ENCODE measurements at regions of chr1 and their contacts with region 1.

Region 1: DNA sequence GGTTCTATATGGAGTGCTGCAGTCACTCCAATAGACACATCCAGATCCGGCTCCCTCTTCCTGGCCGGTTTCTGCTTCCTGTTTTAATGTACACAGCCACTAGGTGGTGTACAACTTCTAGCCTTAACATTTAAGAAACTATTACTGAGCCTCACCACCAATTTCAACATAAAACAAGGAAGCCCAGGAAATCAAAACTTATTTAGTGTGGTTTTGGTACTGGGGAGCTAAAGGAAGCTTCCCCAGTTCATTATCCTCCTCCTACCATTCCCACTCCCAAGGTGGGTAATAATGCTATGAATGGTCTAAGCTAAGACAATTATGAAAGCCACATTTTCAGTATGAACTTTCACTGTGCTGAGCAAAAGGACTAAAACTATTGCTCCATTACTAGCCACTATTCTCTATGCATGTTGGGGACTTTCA is 25.5 kb upstream of the MTMR11 start:
- DNase-seq: peak; percentile 62
- H3K4me3 ChIP-seq: no peak overlapping the region
- H3K27ac ChIP-seq: no peak overlapping the region
- H3K27me3 ChIP-seq: no peaks in the 10 kb centered on the region
- CTCF ChIP-seq: peak; percentile 75

Region 2: DNA sequence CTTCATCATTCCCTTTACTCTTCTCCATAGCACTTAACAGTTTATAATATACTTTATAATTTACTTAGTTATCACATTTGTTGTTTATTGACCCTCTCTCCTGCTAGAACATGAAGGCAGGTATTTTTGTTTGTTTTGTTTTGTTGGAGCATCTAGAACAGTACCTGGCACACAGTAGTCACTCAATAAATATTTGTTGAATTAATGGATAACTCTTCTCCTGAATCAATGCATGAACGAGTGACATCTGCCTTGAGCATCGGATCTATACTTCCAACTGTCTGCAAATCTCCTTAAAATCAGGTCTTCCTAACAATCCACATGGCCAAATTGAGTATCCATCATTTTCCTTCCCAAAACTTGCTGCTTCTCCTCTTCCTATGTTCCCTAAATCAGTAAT is 10.4 kb after region 1 on chr1:
- CTCF ChIA-PET with region 1: interaction called, 16 read pairs
- POLR2A ChIA-PET with region 1: no interaction called
- DNase-seq: no peak
- H3K4me3 ChIP-seq: no peak overlapping the region
- H3K27ac ChIP-seq: no peak overlapping the region
- H3K27me3 ChIP-seq: no peaks in the 10 kb centered on the region
- CTCF ChIP-seq: no peak

Region 3: DNA sequence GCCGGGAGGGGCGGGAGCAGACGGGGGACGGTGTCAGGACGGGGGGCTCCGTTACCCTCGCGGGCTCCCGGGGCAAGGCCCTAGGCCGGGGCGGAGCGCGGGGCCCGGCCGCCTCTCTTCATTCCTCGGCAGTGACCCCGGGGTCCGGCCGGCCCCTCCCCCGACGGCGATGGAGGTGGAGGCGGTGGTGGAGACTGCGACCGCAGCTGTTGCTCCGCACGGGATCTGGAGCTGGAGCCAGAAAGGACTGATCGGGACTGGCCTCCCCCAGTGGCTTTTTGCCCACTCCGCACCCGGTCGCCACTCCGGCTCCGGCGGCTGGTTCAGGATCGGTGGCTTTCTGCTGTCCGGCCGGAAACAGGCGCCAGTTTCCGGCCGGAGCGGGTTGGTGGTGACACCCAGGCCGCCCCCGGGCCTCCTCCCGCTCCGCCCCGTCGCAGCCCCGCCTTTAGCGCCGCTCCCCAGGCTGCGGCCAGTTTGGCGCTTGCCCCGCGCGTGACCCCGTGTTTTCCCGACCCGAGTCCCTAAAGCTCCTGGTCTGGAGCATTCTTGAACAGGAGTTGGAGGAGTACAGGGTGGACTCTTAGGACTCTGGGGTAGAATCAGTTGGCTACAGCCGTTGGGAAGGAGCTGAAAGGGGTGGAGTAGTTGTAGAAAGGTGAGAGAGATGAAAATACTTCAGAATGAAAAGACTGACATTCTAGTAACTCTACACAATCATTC is 48.4 kb after region 1 on chr1 and contains the start of gene OTUD7B:
- CTCF ChIA-PET with region 1: interaction called, 20 read pairs
- POLR2A ChIA-PET with region 1: no interaction called
- DNase-seq: peak; percentile 63
- H3K4me3 ChIP-seq: peak within 1 kb of the TSS; percentile 94
- H3K27ac ChIP-seq: peak within 1 kb of the TSS; percentile 96
- H3K27me3 ChIP-seq: no peaks in the 10 kb centered on the region
- CTCF ChIP-seq: no peak
- polyA plus RNA-seq, gene OTUD7B: 10.7 and 11.5 TPM in 2 replicates

Region 4: DNA sequence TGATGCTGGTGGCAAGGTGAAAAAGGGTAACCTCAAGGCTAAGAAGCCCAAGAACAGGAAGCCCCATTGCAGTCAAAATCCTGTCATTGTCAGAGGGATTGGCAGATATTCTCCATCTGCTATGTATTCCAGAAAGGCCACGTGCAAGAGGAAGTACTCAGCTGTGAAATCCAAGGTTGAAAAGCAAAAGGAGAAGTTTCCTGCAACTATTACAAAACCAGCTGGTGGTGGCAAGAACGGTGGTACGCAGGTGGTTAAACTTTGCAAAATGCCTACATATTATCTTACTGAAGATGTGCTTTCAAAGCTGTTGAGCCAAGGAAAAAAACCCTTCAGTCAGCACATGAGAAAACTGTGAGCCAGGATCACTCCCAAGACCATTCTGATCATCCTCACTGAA is 91.8 kb after region 1 on chr1:
- CTCF ChIA-PET with region 1: interaction called, 59 read pairs
- POLR2A ChIA-PET with region 1: interaction called, 10 read pairs
- DNase-seq: no peak
- H3K4me3 ChIP-seq: no peak overlapping the region
- H3K27ac ChIP-seq: no peak overlapping the region
- H3K27me3 ChIP-seq: no peaks in the 10 kb centered on the region
- CTCF ChIP-seq: no peak

Region 5: DNA sequence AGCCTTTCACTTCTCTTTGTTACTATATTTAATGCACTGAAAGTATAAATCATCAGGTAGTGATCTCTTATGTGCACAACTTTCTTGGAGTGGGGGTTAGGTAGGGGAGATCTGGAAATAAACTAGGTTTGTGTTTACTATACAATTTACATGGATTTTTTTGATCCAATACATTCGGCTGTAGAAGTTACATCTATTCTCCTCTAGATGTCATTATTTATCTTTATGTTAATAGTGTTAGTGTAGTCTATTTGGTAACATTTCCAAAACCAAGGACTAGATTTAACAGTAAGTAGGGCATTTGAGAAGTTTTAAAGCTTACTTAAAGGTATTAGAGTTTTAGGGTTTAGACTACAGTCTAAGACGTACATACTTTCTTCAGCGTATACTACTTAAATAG is 110.8 kb after region 1 on chr1:
- CTCF ChIA-PET with region 1: interaction called, 11 read pairs
- POLR2A ChIA-PET with region 1: no interaction called
- DNase-seq: no peak
- H3K4me3 ChIP-seq: no peak overlapping the region
- H3K27ac ChIP-seq: no peak overlapping the region
- H3K27me3 ChIP-seq: no peaks in the 10 kb centered on the region
- CTCF ChIP-seq: peak; percentile 46

Region 6: DNA sequence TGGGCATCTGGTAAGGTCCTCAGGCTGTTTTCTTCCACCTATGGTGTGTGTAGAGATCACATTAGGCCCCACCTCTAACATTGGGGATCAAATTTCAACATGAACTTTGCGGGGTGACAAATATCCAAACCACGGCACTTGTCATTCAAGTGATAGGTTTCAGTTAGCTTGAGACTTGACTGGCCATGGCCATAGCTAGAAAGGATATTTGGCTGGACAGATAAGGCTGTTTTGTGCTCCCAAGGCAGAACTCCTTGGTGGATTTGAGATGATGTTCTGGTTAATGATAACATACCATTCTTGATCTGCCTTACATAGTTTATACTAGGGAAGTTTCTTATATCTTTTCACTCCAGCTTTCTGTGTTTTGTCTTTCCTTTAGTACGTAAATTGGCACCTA is 1706.0 kb after region 1 on chr1:
- CTCF ChIA-PET with region 1: no interaction called
- POLR2A ChIA-PET with region 1: no interaction called
- DNase-seq: no peak
- H3K4me3 ChIP-seq: no peak overlapping the region
- H3K27ac ChIP-seq: no peak overlapping the region
- H3K27me3 ChIP-seq: no peaks in the 10 kb centered on the region
- CTCF ChIP-seq: no peak

Measured in AG04450 (cell line).